ENCODE measurements at regions of chr17 and their contacts with region 1.

Region 1: GRCh38 chr17:29148790-29149430 is 31.3 kb downstream of the MYO18A start:
- DNase-seq: peak; percentile 90
- ATAC-seq: peak; percentile 98
- H3K4me3 ChIP-seq: peak overlapping the region; percentile 54
- H3K27ac ChIP-seq: peak overlapping the region; percentile 53
- H3K4me1 ChIP-seq: peaks cover 17% of the 10 kb centered on the region
- H3K27me3 ChIP-seq: no peaks in the 10 kb centered on the region
- CTCF ChIP-seq: peak; percentile 99
- POLR2A ChIP-seq: peak; percentile 59; the same call in 1 of the 2 replicates
- RAD21 ChIP-seq: peak; percentile 94

Region 2: GRCh38 chr17:29069526-29070041 is 79.3 kb before region 1 on chr17:
- CTCF ChIA-PET with region 1: no interaction called
- POLR2A ChIA-PET with region 1: no interaction called
- dilution Hi-C with region 1: no loop called
- in situ Hi-C with region 1: no loop called
- intact Hi-C with region 1: no loop called
- DNase-seq: peak; percentile 9
- ATAC-seq: peak; percentile 64
- H3K4me3 ChIP-seq: no peak overlapping the region
- H3K27ac ChIP-seq: no peak overlapping the region
- H3K4me1 ChIP-seq: no peaks in the 10 kb centered on the region
- H3K27me3 ChIP-seq: peaks cover 30% of the 10 kb centered on the region
- CTCF ChIP-seq: no peak
- POLR2A ChIP-seq: no peak
- RAD21 ChIP-seq: no peak

Region 3: GRCh38 chr17:29116804-29117772 is 31.8 kb before region 1 on chr17:
- CTCF ChIA-PET with region 1: interaction called, 10 read pairs
- POLR2A ChIA-PET with region 1: no interaction called
- dilution Hi-C with region 1: no loop called
- in situ Hi-C with region 1: no loop called
- intact Hi-C with region 1: no loop called
- DNase-seq: peak; percentile 47
- ATAC-seq: peak; percentile 78
- H3K4me3 ChIP-seq: no peak overlapping the region
- H3K27ac ChIP-seq: no peak overlapping the region
- H3K4me1 ChIP-seq: no peaks in the 10 kb centered on the region
- H3K27me3 ChIP-seq: no peaks in the 10 kb centered on the region
- CTCF ChIP-seq: peak; percentile 77
- POLR2A ChIP-seq: no peak
- RAD21 ChIP-seq: peak; percentile 70

Region 4: DNA sequence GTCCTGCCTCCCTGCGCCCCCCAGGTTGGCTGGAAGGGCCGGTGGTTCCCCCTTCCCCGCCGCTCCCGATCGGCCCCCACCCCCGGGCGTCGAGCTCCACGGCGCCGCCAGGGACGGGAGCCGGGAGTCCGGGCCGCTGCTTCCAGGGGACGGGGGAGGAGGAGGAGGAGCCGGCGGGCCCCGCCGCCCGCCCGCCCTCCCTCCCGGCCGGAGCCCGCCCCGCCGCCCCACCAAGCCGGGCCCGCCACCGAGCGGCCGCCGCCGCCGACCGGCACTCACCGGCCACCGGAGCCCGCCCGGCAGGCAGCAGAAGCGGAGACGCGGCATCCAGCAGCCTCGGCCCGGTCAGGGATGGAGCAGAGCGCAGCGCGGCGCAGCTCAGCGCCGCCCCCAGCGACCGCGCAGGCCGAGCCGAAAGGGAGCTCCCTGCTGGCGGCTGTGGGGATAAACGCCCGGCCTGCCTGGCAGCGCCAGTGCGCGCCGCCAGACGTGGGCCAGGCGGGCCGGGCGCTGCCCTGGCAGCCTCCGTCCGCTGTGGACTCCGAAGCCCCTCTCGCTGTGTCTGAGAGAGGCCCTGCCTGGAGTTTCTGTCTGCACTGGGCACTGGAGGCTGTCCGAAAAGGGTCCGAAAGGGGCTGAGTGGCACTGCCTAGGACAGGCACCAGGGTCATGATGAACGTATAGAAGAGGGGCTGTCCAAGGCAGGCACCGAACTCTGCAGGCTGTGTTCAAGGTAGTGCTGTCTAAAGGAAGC is 31.3 kb after region 1 on chr17 and contains the start of gene MYO18A:
- CTCF ChIA-PET with region 1: interaction called, 25 read pairs
- POLR2A ChIA-PET with region 1: interaction called, 5 read pairs
- dilution Hi-C with region 1: no loop called
- in situ Hi-C with region 1: no loop called
- intact Hi-C with region 1: loop called (anchors 1 kb)
- DNase-seq: peak; percentile 71
- ATAC-seq: peak; percentile 94
- H3K4me3 ChIP-seq: peak within 1 kb of the TSS; percentile 79
- H3K27ac ChIP-seq: peak within 1 kb of the TSS; percentile 84
- H3K4me1 ChIP-seq: peaks cover 29% of the 10 kb centered on the region
- H3K27me3 ChIP-seq: no peaks in the 10 kb centered on the region
- CTCF ChIP-seq: peak; percentile 98
- POLR2A ChIP-seq: no peak
- RAD21 ChIP-seq: peak; percentile 71
- total RNA-seq, gene MYO18A: 39.1 and 40.0 TPM in 2 replicates

Region 5: DNA sequence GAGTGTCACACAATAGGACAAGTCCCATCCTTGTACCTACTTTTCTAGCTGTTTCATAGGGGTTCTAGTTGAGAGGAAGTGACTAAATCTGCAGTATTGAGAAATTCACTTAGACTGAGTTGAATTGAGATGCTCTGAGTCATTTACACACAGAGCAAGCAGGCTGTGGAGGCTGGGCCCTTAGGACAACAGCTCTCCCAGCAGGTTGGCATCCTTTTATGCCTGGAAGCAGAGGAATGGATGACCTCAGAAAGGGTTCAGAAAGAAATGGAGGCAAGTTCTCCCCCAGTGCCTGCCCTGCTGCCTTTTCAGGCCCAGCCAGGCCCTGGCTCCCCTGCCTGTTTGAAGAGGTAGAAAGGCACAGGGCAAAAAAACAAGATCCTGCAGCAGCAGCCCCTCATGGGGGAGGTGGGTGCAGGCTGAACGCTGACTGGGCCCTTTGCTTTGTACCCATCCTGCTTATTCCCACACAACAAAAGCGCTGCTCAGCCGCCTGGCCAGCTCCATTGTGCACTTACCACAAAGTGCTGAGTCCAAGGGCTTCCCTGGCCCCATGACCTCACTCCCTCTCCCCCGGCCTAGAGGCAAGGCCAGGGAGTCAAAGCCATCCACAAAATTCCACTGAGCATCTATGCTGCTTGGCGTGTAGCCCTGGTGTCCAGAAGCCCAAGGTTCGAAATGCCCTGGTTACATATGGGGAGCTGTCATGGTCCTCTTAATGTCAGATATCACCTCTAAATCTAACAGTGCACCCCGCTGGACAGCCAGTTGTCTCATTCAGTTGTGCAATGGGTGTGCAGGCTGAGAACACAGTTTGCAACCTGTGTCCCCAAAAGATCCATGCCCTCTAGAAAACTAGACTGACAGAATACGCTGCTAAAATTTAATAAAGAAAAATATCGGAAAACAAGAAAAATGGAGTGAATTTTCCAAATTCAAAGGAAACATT is 92.4 kb after region 1 on chr17:
- CTCF ChIA-PET with region 1: interaction called, 14 read pairs
- POLR2A ChIA-PET with region 1: interaction called, 5 read pairs
- dilution Hi-C with region 1: no loop called
- in situ Hi-C with region 1: no loop called
- intact Hi-C with region 1: no loop called
- DNase-seq: peak; percentile 98
- ATAC-seq: peak; percentile 90
- H3K4me3 ChIP-seq: no peak overlapping the region
- H3K27ac ChIP-seq: peak overlapping the region; percentile 97
- H3K4me1 ChIP-seq: peaks cover 25% of the 10 kb centered on the region
- H3K27me3 ChIP-seq: no peaks in the 10 kb centered on the region
- CTCF ChIP-seq: 0 out of 2 replicates have a peak, but pooled peaks have one; percentile 18
- POLR2A ChIP-seq: no peak
- RAD21 ChIP-seq: peak; percentile 14; the same call in 1 of the 2 replicates

Region 6: DNA sequence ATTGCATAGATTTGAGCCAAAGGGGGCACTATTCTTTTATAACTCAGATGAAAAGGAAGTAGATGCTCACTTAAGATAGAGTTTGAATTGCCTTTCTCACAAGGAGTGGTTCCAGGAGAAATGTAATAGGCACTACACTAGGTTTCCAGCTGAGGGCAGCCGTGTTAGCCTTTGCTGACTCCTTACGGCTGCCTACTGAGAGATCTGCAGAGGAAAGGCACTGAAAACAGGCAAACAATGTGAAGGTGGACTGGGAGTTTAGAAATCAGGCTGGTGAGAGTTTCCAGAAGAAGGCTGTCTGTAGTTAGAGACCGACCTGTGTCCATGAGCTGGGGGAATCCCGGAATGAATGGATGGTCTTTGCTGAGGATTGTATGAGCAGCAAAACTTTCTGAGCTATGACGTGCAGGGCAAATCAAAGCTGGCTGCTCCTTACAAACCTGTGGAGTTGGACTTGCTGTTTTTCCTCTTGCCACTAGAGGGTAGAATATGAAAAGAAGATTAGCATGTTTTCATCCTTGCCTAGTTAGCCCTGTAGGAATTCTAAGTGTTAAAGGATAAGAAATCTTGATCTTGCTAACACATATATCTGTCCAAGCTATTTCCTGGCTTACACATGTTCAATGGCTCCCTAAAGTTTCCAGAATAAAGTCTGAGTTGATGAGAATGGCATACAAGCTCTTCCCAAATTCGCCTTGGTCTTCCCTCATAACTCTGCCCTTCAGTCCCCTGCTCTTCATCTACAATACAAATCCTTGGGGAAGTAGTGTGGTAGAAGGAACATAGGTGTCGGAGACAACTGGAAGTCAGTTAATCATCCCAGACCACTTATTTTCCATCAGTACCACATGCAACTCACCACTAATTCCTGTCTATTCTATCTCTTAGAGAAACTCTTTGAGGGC is 221.2 kb after region 1 on chr17:
- CTCF ChIA-PET with region 1: interaction called, 4 read pairs
- POLR2A ChIA-PET with region 1: no interaction called
- dilution Hi-C with region 1: no loop called
- in situ Hi-C with region 1: no loop called
- intact Hi-C with region 1: loop called (anchors 5 kb)
- DNase-seq: peak; percentile 85
- ATAC-seq: peak; percentile 96
- H3K4me3 ChIP-seq: peak overlapping the region; percentile 36; the same call in 1 of the 2 replicates
- H3K27ac ChIP-seq: no peak overlapping the region
- H3K4me1 ChIP-seq: no peaks in the 10 kb centered on the region
- H3K27me3 ChIP-seq: no peaks in the 10 kb centered on the region
- CTCF ChIP-seq: peak; percentile 74
- POLR2A ChIP-seq: peak; percentile 42; the same call in 1 of the 2 replicates
- RAD21 ChIP-seq: peak; percentile 73

Measured in IMR-90 (cell line).